Prostate gland (tissue), 2 donors: ENCODE measurements at regions of chr18 and their contacts with region 1.

Region 1: DNA sequence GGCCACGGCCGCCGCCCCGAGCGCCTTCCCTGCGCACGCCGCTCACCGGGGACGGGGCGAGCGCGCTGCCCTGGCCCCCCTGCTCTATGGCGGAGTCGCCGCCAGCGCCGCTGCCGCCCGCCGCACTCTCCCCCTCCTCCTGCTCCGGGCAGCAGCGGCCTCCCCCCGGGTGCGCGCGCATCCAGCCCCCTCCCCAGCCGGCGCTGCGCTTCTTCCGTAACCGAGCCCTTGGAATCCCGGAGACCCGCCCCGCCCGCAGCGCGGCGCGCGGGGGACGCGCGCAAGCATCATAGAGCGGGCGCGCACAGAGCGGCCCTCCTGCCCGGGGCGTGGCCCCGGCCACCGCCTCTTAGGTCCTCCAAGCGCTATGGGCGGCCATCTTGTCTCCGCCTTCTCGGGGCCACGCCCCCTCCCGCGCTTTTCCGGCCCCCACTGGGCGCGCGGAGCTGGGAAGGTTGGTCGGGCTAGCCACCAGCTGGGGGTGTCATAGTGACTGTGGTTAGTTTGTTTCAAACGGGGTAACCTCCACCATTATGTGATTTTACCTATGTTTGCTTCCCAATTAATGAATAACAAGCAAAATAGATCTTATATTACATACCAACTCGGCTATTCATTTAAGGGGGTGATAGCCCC is at the start of gene MBD2:
- DNase-seq: peak; percentile 93
- H3K4me3 ChIP-seq: peak within 1 kb of the TSS; percentile 73 to 80
- H3K27ac ChIP-seq: peak within 1 kb of the TSS; percentile 86 to 90
- H3K4me1 ChIP-seq: peaks cover 8% of the 10 kb centered on the region
- H3K27me3 ChIP-seq: no peaks in the 10 kb centered on the region
- CTCF ChIP-seq: peak in 2 of 4 experiments; percentile 38 to 43
- POLR2A ChIP-seq: peak; percentile 76
- total RNA-seq, gene MBD2: 33.3 to 50.3 TPM

Region 2: DNA sequence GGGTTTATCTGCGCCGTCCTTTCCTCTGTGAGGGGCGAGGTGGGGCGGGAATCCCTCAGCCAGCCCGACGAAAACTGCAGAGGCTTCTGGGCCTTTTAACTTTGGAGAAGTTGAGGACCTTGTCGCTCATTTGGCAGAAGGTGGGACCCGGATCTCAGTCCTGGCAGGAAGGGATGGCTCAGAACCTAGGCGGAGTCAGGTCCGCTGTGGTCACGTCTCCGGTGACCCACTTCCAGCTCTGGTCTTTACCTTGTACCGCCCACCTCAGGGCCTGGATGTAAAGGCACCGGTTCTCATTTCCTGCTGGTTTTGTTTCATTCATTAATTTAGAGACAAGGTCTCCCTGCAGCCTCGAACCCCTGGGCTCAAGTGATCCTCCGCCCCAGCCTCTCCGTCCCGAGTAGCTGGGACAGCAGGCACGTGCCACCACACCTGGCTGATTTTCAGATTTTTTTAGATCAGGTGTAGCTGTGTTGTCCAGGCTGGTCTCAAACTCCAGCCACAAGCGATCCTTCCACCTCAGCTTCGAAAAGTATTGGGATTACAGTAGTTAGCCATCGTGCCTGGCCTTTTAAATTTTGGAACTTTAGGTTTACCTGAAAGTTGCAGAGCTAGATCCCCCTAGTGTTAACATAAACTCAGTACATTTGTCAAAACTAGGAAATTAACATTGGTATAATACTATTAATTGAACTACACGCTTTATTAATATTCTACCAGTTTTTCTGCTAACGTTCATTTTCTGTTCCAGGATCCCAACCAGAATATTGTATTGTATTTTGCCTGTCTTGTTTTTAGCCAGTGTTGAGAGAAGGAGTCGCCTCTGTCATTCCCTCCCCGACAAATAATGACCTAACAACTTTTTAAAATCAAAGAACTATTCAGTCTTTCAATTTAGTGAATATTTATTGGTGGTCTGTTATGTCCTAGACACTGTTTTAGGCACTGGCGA is 45.7 kb after region 1 on chr18:
- intact Hi-C with region 1: loop called (anchors 2 kb)
- DNase-seq: peak; percentile 39
- H3K4me3 ChIP-seq: peak overlapping the region; percentile 58 to 83
- H3K27ac ChIP-seq: peak overlapping the region; percentile 92 to 94
- H3K4me1 ChIP-seq: no peaks in the 10 kb centered on the region
- H3K27me3 ChIP-seq: no peaks in the 10 kb centered on the region
- CTCF ChIP-seq: peak in 3 of 4 experiments; percentile 42 to 66 (median 61)
- POLR2A ChIP-seq: no peak

Region 3: GRCh38 chr18:54284981-54285785 is 60.7 kb after region 1 on chr18:
- intact Hi-C with region 1: no loop called
- DNase-seq: no peak
- H3K4me3 ChIP-seq: no peak overlapping the region
- H3K27ac ChIP-seq: no peak overlapping the region
- H3K4me1 ChIP-seq: no peaks in the 10 kb centered on the region
- H3K27me3 ChIP-seq: no peaks in the 10 kb centered on the region
- CTCF ChIP-seq: no peak
- POLR2A ChIP-seq: no peak

Region 4: DNA sequence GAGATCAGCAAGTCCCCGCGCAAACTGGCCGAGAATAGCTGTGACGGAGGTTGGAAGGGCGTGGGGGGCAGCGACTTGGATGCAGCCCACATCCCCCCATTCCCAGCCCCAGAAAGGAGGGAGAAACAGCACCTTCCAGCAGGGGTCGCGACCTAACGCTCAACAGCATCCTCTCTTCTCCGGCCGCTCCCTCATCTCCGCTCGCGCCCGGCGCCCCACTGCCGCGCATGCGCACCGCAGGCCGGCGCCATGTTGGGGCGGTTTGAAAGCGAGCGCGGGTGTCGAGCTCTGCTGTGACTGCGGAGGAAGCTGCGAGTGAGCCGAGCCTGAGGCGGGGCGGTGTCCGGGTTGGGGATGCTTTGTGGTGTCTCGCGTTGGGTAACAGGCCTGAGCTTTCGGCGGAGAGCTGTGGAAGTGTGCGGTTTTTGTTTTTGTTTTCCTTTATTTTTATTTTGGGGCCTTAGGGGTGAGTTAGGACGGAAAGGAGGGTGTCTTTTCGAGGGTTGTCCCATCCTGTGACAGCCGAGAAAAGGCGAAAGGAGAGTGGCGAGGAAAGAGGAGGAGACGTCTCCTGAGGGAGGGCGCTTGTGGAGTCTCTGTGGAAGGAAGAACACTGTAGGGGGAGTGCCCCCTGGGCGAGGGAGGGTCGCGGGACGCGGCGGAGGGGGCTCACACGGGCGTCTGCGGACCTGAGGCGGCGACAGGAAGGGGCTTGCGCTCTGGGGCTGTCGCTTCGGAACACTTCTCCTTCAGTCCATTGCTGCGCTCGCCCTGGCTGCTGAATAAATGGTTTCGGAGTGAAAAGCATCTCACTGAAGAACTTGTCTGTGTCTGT is 133.4 kb after region 1 on chr18 and contains the starts of genes C18orf54 and STARD6:
- intact Hi-C with region 1: loop called (anchors 10 kb)
- DNase-seq: peak; percentile 76
- H3K4me3 ChIP-seq: peak within 1 kb of the TSS; percentile 54 to 55
- H3K27ac ChIP-seq: peak within 1 kb of the TSS in 1 of 2 donors; percentile 38
- H3K4me1 ChIP-seq: no peaks in the 10 kb centered on the region
- H3K27me3 ChIP-seq: no peaks in the 10 kb centered on the region
- CTCF ChIP-seq: peak in 3 of 4 experiments; percentile 20 to 46 (median 34)
- POLR2A ChIP-seq: peak; percentile 38
- total RNA-seq, gene C18orf54: 1.3 to 5.6 TPM
- total RNA-seq, gene STARD6: not detected

Region 5: DNA sequence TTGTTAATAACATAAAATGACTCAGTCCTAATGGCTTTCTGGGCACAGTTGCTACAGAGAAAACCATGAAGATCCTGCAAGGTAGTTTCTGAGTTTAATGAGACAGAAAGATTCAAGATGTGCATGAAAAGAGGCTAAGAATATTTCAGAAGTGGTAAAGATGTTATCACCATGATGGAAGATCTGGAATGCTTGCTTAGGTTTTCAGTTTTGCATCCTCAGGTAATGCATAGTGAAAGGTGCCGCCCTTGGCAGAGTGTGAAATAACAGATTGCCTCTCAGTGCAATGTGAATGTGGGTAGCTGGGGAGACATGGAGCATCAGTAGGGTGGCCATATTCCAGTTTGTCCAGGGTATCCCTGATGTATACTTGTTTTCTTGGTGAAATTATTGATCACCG is 195.6 kb after region 1 on chr18:
- intact Hi-C with region 1: no loop called
- DNase-seq: no peak
- H3K4me3 ChIP-seq: no peak overlapping the region
- H3K27ac ChIP-seq: no peak overlapping the region
- H3K4me1 ChIP-seq: no peaks in the 10 kb centered on the region
- H3K27me3 ChIP-seq: no peaks in the 10 kb centered on the region
- CTCF ChIP-seq: no peak
- POLR2A ChIP-seq: no peak